Sigmoid colon (tissue), 7 donors: ENCODE measurements at regions of chr5 and their contacts with region 1.

Region 1: DNA sequence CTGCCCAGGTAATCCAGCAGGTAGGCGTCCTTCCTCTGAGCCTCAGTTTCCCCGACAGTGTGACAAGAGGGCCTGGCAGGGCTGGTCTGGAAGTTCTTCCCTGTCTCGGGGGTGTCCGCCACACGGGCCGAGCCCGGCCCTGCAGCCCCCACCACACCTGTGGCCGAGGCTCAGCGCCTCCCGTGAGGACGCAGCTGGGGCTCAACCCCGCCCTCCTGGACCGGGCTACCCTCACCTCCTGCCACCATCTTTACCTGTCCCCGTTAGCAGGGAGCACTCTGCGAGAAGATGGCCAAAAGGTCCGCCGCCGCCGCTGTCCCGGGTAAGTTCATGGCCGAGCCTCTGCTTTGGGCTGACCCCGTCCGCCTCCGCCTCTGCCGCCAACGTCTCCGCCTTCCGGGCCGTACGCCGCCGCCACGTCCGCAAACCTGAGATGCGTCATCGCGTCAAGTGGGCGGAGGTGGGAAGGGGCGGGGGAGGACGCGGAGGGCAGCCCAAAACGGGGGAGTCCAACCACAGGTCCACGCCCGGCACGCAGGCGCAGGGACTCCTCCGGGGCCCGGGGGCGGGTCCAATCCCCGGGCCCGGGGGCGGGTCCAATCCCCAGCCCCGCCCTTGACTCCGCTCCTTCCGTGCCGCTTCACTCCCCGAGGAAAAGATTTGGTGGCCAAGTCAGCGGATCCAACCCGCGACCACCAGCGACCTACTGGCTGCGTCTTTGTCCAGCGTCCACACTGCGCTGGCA is at the start of gene LYSMD3:
- DNase-seq: peak; percentile 99
- H3K4me3 ChIP-seq: peak within 1 kb of the TSS; percentile 70 to 95 (median 88)
- H3K27ac ChIP-seq: peak within 1 kb of the TSS; percentile 91 to 96 (median 94)
- H3K4me1 ChIP-seq: peaks cover 0 to 38% (median 19%) of the 10 kb centered on the region in 4 donors
- H3K27me3 ChIP-seq: no peaks in the 10 kb centered on the region
- CTCF ChIP-seq: no peak
- EP300 ChIP-seq: peak in 1 of 4 donors; percentile 10
- POLR2A ChIP-seq: peak; percentile 60 to 88
- total RNA-seq, gene LYSMD3: 15.5 to 23.7 (median 19.2) TPM

Region 2: GRCh38 chr5:88883059-88883835 is 1646.1 kb before region 1 on chr5 and contains the start of gene MEF2C:
- intact Hi-C with region 1: loop called (anchors 10 kb)
- DNase-seq: peak; percentile 88
- H3K4me3 ChIP-seq: peak within 1 kb of the TSS; percentile 57 to 65 (median 60)
- H3K27ac ChIP-seq: peak within 1 kb of the TSS; percentile 87 to 93 (median 88)
- H3K4me1 ChIP-seq: peaks cover 0 to 67% (median 43%) of the 10 kb centered on the region in 4 donors
- H3K27me3 ChIP-seq: no peaks in the 10 kb centered on the region
- CTCF ChIP-seq: no peak
- EP300 ChIP-seq: no peak
- POLR2A ChIP-seq: peak; percentile 38 to 80
- total RNA-seq, gene MEF2C: 32.1 to 51.4 (median 40.2) TPM

Region 3: DNA sequence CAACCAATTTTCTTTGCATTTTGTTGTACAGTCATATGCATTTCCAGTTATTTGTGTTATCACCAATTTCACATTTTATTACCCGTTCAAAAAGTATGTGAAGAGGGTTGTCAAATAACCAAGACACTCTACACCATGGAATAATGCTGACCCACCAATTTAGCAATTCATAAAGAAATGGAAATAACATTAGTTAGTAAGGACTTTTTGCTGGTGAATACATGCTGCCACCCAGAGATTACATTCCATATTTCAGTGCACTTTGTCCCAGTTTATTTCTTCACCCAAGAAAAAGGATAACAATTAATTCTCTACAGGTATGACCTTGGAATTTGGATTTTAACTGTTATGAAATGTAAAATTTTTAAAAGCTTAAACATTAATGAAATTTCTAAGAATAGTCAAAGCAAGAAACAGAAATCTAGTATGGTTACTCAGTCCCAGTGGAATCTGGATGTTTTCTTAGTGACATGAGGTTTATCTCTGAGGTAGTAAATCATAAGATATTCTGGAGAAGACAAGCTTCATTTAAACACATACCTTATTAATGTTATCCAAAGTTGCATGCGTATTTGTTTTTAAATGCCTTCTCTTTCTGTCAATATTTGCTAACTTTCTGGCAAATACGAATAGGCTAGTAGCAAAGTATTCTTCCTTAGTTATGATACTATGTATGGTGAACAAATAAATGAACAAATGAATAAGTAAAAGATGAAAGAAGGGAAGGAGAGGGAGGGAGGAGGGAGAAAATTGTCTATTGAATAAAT is 220.4 kb before region 1 on chr5:
- intact Hi-C with region 1: no loop called
- DNase-seq: no peak
- H3K4me3 ChIP-seq: no peak overlapping the region
- H3K27ac ChIP-seq: no peak overlapping the region
- H3K4me1 ChIP-seq: peaks cover 0 to 16% (median 8%) of the 10 kb centered on the region in 4 donors
- H3K27me3 ChIP-seq: no peaks in the 10 kb centered on the region
- CTCF ChIP-seq: no peak
- EP300 ChIP-seq: no peak
- POLR2A ChIP-seq: no peak

Region 4: GRCh38 chr5:90409318-90410177 is 119.8 kb before region 1 on chr5 and contains the start of gene CETN3:
- intact Hi-C with region 1: loop called (anchors 1 kb)
- DNase-seq: peak; percentile 97
- H3K4me3 ChIP-seq: peak within 1 kb of the TSS; percentile 70 to 85 (median 78)
- H3K27ac ChIP-seq: peak within 1 kb of the TSS; percentile 90 to 98 (median 96)
- H3K4me1 ChIP-seq: peaks cover 0 to 15% (median 10%) of the 10 kb centered on the region in 4 donors
- H3K27me3 ChIP-seq: no peaks in the 10 kb centered on the region
- CTCF ChIP-seq: no peak
- EP300 ChIP-seq: no peak
- POLR2A ChIP-seq: peak; percentile 74 to 86
- total RNA-seq, gene CETN3: 2.8 to 13.2 (median 7.7) TPM

Region 5: DNA sequence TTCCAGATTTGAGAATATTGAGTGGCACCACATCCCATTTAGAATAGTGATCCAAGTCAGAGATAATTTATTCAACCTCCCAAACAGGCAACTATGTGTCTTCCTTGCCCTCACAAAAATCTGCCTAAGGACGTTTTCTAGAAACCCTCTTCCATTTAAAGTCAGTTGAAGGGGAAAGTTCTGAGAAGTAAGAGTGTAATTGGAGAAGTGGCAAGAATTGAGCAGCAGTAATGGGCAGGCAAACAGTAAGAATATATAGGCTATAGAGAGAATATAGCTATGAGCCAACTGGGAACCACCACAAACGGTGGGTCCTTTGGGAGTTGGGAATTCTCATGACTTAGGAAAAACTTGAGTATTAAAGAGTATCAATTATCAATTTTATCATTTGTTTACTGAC is 88.7 kb before region 1 on chr5:
- intact Hi-C with region 1: loop called (anchors 1 kb)
- DNase-seq: no peak
- H3K4me3 ChIP-seq: no peak overlapping the region
- H3K27ac ChIP-seq: no peak overlapping the region
- H3K4me1 ChIP-seq: no peaks in the 10 kb centered on the region
- H3K27me3 ChIP-seq: no peaks in the 10 kb centered on the region
- CTCF ChIP-seq: no peak
- EP300 ChIP-seq: no peak
- POLR2A ChIP-seq: no peak

Region 6: GRCh38 chr5:90474235-90475109 is 54.9 kb before region 1 on chr5 and contains the starts of genes MBLAC2 and POLR3G:
- intact Hi-C with region 1: loop called (anchors 1 kb)
- DNase-seq: peak; percentile 96
- H3K4me3 ChIP-seq: peak within 1 kb of the TSS; percentile 70 to 85 (median 80)
- H3K27ac ChIP-seq: peak within 1 kb of the TSS; percentile 77 to 83 (median 80)
- H3K4me1 ChIP-seq: peaks cover 0 to 28% (median 23%) of the 10 kb centered on the region in 4 donors
- H3K27me3 ChIP-seq: no peaks in the 10 kb centered on the region
- CTCF ChIP-seq: peak; percentile 50 to 65 (median 62)
- EP300 ChIP-seq: no peak
- POLR2A ChIP-seq: peak; percentile 50 to 66
- total RNA-seq, gene MBLAC2: 4.9 to 7.1 (median 6.1) TPM
- total RNA-seq, gene POLR3G: 1.1 to 5.8 (median 2.6) TPM

Region 7: DNA sequence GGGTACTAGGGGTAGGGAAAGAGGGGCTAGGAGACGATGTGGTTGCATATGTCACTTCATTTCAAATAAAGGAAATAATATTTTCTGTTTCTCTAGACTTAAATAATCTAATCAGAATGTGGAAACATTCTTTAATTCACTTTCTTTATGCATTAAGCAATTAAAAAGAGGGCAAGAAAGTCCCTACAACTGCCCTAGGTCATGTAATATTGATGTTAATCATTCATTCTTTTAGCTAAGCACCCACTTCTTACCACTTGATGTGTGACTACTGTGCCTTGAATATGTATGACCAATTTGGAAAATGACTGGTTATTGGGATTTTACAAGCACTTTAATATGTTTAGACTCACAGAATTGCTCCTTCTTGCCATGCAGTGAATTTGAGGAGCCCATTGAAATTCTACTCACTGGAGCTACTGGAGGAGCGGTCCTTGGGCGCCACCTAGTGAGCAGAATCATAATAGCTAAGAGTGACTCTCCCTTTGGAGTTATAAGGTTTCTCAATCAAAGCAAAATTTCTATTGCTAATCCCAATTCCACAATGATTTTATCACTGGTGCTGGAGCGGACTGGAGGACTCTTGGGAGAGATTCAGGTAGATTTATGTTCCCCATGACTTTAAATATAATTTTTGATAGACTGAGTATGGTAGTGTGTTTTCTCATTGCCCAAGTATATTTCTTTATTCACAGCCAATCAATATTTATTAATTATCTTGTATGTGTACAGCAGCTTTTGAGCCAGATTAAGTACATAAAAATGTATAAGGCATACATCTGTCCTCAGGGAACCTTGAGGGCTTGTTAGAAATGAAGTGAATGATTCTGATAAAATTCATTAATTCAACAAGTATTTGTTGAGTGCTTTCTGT is 254.3 kb after region 1 on chr5:
- intact Hi-C with region 1: no loop called
- DNase-seq: peak; percentile 75
- H3K4me3 ChIP-seq: no peak overlapping the region
- H3K27ac ChIP-seq: no peak overlapping the region
- H3K4me1 ChIP-seq: no peaks in the 10 kb centered on the region
- H3K27me3 ChIP-seq: no peaks in the 10 kb centered on the region
- CTCF ChIP-seq: peak; percentile 15 to 82 (median 42)
- EP300 ChIP-seq: no peak
- POLR2A ChIP-seq: no peak

Region 8: DNA sequence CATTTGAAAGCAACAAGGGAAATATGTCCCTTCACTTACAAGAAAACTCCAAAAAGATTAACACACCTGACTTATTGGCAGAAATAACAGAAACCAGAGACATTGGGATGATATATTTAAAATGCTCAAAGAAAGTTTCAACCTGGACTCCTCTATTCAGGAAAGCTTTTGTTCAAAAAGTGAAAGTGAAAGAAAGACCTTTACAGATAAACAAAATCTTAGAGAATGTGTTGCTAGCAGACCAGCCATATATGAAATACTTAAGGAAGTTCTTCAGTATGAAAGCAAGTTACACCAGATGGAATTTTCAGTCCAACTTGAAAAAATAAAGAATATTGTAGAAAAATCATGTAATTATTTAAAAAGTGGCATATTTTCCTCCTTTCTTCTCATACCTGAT is 1976.6 kb after region 1 on chr5:
- intact Hi-C with region 1: no loop called
- DNase-seq: no peak
- H3K4me3 ChIP-seq: peak overlapping the region in 1 of 4 donors; percentile 1
- H3K27ac ChIP-seq: no peak overlapping the region
- H3K4me1 ChIP-seq: no peaks in the 10 kb centered on the region
- H3K27me3 ChIP-seq: no peaks in the 10 kb centered on the region
- CTCF ChIP-seq: no peak
- EP300 ChIP-seq: no peak
- POLR2A ChIP-seq: no peak